PC-3 (cell line): ENCODE measurements at regions of chr16 and their contacts with region 1.

Region 1: DNA sequence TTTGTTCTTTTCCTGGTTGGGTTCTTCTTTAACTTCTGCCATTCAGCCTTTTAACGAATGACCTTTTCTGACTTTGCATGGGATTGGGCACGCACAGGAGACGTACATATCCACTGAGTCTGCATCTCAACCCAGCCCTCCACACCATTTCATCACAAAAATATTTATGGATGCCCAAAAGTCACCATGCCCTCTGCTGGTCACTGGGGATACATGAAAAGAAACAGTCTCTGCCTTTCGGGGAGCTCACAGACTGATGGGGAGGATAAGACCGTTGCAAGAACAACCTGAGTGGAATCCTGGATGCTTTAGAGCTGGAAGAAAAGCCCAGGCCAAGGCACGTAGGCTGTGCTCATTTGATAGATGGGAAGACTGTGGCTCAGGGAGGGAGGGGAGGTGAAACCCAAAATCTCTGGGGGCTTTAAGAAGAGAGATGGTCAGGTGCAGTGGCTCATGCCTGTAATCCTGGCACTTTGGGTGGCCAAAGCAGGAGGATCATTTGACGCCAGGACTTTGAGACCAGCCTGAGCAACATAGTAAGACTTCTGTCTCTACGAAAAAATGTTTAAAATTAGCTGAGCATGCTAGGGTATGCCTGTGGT is 7.9 kb upstream of the MT2A start:
- DNase-seq: peak; percentile 68
- ATAC-seq: peak; percentile 69; the same call in 1 of the 2 replicates
- H3K4me3 ChIP-seq: peak overlapping the region; percentile 53; the same call in 1 of the 2 replicates
- H3K27ac ChIP-seq: no peak overlapping the region
- H3K4me1 ChIP-seq: peaks cover 14% of the 10 kb centered on the region
- H3K27me3 ChIP-seq: no peaks in the 10 kb centered on the region
- CTCF ChIP-seq: peak; percentile 81

Region 2: DNA sequence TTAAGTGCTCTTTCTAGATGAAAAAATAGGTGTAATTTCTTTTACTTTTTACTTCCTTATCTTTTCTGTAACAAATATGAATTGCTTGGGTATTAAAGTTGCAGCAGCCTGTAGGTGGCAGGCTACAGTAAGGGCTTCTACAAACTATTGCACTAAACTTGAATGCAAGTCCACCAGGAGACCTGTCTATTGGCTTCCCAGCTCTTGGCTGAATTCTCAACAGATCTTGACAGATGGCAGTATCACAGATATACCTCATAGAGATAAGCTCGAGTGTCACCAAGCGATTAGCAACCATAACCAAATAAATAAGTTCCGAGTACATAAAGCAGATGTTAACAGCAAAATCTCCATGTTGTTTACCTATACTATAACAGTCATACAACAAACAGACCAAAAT is 86.5 kb before region 1 on chr16:
- CTCF ChIA-PET with region 1: interaction called, 3 read pairs
- POLR2A ChIA-PET with region 1: no interaction called
- intact Hi-C with region 1: loop called (anchors 1 kb)
- DNase-seq: peak; percentile 64
- ATAC-seq: peak; percentile 68
- H3K4me3 ChIP-seq: no peak overlapping the region
- H3K27ac ChIP-seq: no peak overlapping the region
- H3K4me1 ChIP-seq: peaks cover 32% of the 10 kb centered on the region
- H3K27me3 ChIP-seq: no peaks in the 10 kb centered on the region
- CTCF ChIP-seq: peak; percentile 76

Region 3: GRCh38 chr16:56547120-56547948 is 53.2 kb before region 1 on chr16:
- CTCF ChIA-PET with region 1: no interaction called
- POLR2A ChIA-PET with region 1: no interaction called
- intact Hi-C with region 1: no loop called
- DNase-seq: peak; percentile 50
- ATAC-seq: no peak
- H3K4me3 ChIP-seq: no peak overlapping the region
- H3K27ac ChIP-seq: no peak overlapping the region
- H3K4me1 ChIP-seq: peaks cover 10% of the 10 kb centered on the region
- H3K27me3 ChIP-seq: no peaks in the 10 kb centered on the region
- CTCF ChIP-seq: no peak